ENCODE measurements at regions of chr15 and their contacts with region 1.

Region 1: DNA sequence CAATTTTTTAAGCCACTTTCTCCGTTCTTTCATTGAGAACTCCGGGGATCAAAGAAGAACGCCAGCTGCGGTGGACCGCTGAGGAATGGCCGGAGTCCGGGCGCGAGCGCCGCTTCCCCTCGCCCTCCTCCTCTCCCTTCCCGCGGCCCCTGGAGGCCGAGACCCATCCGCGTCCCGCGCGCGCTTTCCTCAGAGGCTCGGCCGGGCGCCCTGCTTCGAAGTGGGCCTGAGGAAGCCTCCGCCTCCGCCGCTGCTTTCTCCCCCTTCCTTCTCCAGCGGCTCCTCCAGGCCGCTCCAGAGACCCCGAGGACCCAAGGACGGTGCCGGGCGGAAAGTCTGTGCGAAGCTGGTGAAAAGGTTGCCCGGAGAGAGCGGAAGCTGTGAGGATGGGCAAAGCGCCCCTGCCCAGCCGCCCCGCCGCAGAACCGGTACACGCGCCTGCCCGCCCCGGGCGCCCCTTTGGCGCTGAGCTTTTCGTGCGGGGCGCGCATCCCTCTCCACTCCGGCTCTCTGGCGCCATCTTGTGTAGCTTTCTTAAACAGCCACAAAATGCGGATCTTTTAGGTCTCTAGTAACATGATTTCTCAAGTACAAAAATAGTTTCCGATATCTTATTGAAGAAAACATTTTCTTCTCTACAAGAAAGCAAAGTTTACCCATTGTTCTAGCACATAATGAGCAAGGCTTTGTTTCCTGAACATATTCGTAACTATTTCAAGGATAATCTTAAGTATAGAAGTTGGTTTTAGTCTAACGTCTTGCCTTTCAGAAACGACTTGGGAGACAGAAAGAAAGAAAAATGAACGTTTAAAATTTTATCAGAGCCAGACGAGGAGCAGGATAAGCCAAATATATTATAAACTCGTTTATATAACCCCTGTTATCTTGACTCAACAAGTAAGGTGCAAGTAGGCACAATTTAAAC is 59.2 kb upstream of the FAM174B start:
- DNase-seq: peak; percentile 88
- H3K4me3 ChIP-seq: peak overlapping the region; percentile 28 to 54 (median 52)
- H3K27ac ChIP-seq: peak overlapping the region; percentile 81 to 88 (median 84)
- H3K4me1 ChIP-seq: peaks cover 0 to 15% (median 4%) of the 10 kb centered on the region in 4 donors
- H3K27me3 ChIP-seq: no peaks in the 10 kb centered on the region
- CTCF ChIP-seq: peak; percentile 72 to 88 (median 78)
- EP300 ChIP-seq: no peak
- POLR2A ChIP-seq: peak; percentile 46 to 59

Region 2: GRCh38 chr15:91302588-91303439 is 1411.9 kb before region 1 on chr15:
- intact Hi-C with region 1: loop called (anchors 10 kb)
- DNase-seq: no peak
- H3K4me3 ChIP-seq: no peak overlapping the region
- H3K27ac ChIP-seq: no peak overlapping the region
- H3K4me1 ChIP-seq: peaks cover 0 to 8% (median 2%) of the 10 kb centered on the region in 4 donors
- H3K27me3 ChIP-seq: peaks cover 0 to 20% (median 13%) of the 10 kb centered on the region in 3 donors
- CTCF ChIP-seq: peak; percentile 39 to 67 (median 62)
- EP300 ChIP-seq: no peak
- POLR2A ChIP-seq: no peak

Region 3: DNA sequence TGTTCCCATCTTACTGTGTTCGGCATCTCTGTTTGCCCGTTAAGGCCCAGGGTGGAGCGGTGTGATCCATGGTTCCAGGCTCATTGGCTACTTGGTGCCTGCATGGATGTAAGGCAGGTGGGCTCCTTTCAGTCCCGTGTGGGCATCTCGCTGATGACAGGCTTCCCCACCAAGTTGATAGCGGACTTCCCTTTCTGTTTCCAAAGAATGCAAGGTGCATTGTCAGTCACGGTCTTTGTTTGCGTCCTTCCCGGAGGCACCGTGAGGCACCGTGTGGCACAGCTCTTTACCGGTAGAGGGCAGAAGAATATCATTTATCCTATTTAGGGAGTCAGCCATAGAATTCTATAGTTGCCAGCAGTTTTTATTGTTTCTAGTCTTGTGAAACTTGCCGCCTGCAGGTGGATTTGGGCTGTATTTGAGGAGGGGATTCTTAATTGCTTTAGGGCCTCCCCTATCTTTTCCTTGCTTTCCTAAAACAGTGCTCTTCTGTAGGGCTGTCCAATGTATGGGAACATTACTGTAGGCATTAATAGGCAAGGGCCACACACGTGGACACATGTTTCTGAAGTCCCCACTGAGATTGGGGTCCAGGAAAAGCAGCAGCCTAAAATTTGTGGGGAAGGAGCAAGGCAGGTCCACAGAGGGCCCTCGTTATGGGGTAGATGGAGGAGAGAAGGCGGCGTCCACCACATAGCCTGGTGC is 617.1 kb before region 1 on chr15:
- intact Hi-C with region 1: loop called (anchors 2 kb)
- DNase-seq: no peak
- H3K4me3 ChIP-seq: no peak overlapping the region
- H3K27ac ChIP-seq: no peak overlapping the region
- H3K4me1 ChIP-seq: peaks cover 0 to 5% (median 0%) of the 10 kb centered on the region in 4 donors
- H3K27me3 ChIP-seq: no peaks in the 10 kb centered on the region
- CTCF ChIP-seq: peak; percentile 25 to 73 (median 68)
- EP300 ChIP-seq: no peak
- POLR2A ChIP-seq: no peak

Region 4: DNA sequence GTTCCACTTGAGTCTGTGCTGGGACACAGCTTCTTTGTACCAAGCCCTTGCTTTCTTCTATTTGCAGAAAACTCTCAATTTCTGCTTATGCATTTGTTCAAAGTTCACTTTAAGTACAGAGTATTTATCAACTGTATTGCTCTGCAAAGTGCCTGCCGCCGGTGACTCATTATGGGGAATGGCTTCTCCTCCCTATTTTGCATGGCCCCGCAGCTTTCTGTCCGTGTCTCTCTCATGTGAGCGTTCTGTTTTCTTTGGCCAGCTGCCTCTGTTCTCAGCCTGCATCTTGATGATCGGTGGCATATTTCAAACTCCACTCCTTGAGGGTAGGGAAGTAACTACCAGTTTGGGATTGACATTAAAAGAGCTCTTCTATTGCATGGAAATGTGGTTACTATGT is 349.7 kb before region 1 on chr15:
- intact Hi-C with region 1: no loop called
- DNase-seq: no peak
- H3K4me3 ChIP-seq: no peak overlapping the region
- H3K27ac ChIP-seq: no peak overlapping the region
- H3K4me1 ChIP-seq: no peaks in the 10 kb centered on the region
- H3K27me3 ChIP-seq: no peaks in the 10 kb centered on the region
- CTCF ChIP-seq: no peak
- EP300 ChIP-seq: no peak
- POLR2A ChIP-seq: no peak

Region 5: GRCh38 chr15:92521624-92522008 is 193.1 kb before region 1 on chr15:
- intact Hi-C with region 1: loop called (anchors 1 kb)
- DNase-seq: peak; percentile 89
- H3K4me3 ChIP-seq: no peak overlapping the region
- H3K27ac ChIP-seq: peak overlapping the region in 2 of 4 donors; percentile 31 to 43
- H3K4me1 ChIP-seq: no peaks in the 10 kb centered on the region
- H3K27me3 ChIP-seq: no peaks in the 10 kb centered on the region
- CTCF ChIP-seq: peak; percentile 71 to 89 (median 85)
- EP300 ChIP-seq: no peak
- POLR2A ChIP-seq: no peak

Region 6: DNA sequence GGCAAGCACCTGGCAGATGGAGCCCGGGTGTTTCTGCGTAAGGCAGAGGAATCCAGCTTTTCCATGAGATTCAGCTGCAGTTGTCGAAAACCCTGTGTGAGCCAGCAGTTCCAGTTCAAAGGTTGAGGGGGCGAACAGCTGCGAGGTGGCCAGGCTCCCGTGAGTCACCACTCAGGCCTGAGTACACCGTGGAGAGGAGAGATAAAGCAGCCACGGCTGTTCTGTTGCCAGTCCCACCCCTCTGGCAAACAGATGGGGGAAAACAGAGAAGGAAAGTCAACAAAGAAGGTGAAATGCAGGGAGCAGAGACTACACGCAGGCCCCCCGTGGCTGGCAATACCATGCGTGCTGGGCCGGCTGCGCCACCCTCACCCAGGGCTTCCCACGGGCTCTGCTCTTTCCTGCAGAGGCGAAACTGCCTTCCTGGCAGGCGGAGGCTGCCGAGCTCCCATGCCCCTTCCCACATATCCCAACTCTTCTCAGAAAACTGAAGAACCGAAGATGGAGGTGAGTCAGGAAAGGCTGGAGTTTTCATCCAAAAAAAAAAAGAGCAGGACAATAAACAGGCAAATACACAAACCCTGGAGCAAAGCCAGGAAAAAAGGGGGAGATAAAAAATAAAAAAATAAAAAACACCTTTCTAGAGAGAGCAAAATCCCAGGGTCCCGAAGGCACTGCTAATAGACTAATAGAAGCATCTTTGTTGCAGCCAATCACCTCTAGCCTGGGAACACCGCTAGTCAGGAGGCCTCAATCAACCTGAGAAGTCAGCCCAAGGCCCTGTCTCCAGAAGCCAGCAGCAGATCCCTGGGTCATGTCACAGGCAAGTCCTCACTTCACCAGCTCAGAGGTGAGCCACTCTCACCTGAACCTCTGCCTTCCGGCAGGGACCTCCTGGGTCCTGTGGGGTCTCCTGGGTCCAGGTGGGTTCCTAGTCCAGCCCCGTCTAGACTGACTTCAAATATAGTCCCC is 96.9 kb before region 1 on chr15:
- intact Hi-C with region 1: loop called (anchors 5 kb)
- DNase-seq: peak; percentile 94
- H3K4me3 ChIP-seq: no peak overlapping the region
- H3K27ac ChIP-seq: peak overlapping the region; percentile 47 to 77 (median 70)
- H3K4me1 ChIP-seq: peaks cover 0 to 53% (median 41%) of the 10 kb centered on the region in 4 donors
- H3K27me3 ChIP-seq: no peaks in the 10 kb centered on the region
- CTCF ChIP-seq: no peak
- EP300 ChIP-seq: no peak
- POLR2A ChIP-seq: no peak

Region 7: GRCh38 chr15:92665100-92665555 is 49.6 kb before region 1 on chr15:
- intact Hi-C with region 1: loop called (anchors 10 kb)
- DNase-seq: peak; percentile 85
- H3K4me3 ChIP-seq: peak overlapping the region in 1 of 4 donors; percentile 18
- H3K27ac ChIP-seq: peak overlapping the region; percentile 62 to 76 (median 70)
- H3K4me1 ChIP-seq: peaks cover 0 to 41% (median 36%) of the 10 kb centered on the region in 4 donors
- H3K27me3 ChIP-seq: no peaks in the 10 kb centered on the region
- CTCF ChIP-seq: no peak
- EP300 ChIP-seq: peak; percentile 29 to 96 (median 71)
- POLR2A ChIP-seq: no peak

Region 8: DNA sequence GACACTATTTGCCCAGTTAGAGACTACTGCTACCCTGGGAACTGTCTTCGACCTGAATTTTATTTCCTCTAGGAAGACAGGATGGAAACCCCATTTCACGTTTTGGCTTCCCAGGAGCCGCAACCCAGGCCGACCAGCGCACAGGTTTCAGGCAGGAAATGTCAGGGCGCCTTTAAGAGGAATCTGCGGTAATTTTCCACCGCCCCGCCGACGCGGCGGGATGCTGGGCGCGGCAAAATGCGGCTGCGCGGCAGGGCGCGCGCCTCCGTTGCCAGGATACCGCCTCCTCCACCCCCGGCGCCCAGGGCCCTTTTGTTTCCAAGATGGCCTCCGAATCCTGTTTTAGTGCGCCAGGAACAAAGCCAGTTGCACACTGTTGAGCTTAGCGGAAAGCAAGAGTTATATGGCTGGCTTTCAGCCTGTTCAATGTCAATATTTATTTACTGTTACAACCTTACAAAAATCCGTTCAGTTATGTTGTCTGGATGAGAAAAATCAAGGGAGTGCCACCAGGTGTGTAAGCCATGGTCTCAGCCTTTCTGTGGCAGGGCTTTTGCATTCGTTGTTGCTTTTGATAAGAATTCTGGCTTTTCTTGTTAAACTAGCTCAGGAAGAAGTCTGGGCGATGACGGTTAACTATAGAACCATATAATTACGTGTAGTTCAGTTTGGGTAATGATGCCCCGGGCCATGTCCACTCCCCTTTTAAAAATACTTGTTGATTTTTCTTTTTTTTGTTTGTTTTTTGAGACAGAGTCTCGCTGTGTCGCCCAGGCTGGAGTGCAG is 105.7 kb after region 1 on chr15:
- intact Hi-C with region 1: no loop called
- DNase-seq: peak; percentile 95
- H3K4me3 ChIP-seq: peak overlapping the region; percentile 15 to 47 (median 38)
- H3K27ac ChIP-seq: peak overlapping the region; percentile 67 to 85 (median 82)
- H3K4me1 ChIP-seq: peaks cover 0 to 18% (median 17%) of the 10 kb centered on the region in 4 donors
- H3K27me3 ChIP-seq: no peaks in the 10 kb centered on the region
- CTCF ChIP-seq: no peak
- EP300 ChIP-seq: peak in 1 of 4 donors; percentile 77
- POLR2A ChIP-seq: peak; percentile 31 to 46

Region 9: GRCh38 chr15:92868992-92869988 is 154.6 kb after region 1 on chr15:
- intact Hi-C with region 1: no loop called
- DNase-seq: no peak
- H3K4me3 ChIP-seq: no peak overlapping the region
- H3K27ac ChIP-seq: peak overlapping the region; percentile 68 to 85 (median 78)
- H3K4me1 ChIP-seq: peaks cover 0 to 24% (median 16%) of the 10 kb centered on the region in 4 donors
- H3K27me3 ChIP-seq: no peaks in the 10 kb centered on the region
- CTCF ChIP-seq: no peak
- EP300 ChIP-seq: no peak
- POLR2A ChIP-seq: no peak

Region 10: DNA sequence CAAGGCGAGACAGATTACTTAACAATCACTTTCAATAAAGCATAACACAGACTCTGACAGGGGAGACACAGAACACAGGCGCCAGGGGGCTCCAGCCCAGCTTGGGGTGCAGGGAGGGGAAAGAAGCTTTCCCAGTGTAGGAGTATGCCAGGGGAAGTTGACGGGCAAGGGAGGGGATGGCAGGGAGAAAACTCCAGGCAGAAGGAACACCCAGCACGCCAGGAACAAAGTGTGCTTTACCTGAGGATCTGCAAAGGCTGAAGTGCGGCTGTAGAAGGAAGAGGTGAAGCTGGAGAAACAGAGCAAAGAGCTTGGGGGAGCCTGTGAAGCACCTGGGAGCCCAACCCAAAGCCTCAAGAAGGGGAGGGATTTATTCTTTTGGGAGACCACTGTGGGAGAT is 362.1 kb after region 1 on chr15:
- intact Hi-C with region 1: no loop called
- DNase-seq: no peak
- H3K4me3 ChIP-seq: no peak overlapping the region
- H3K27ac ChIP-seq: peak overlapping the region; percentile 60 to 96 (median 76)
- H3K4me1 ChIP-seq: peaks cover 0 to 85% (median 59%) of the 10 kb centered on the region in 4 donors
- H3K27me3 ChIP-seq: no peaks in the 10 kb centered on the region
- CTCF ChIP-seq: no peak
- EP300 ChIP-seq: peak in 3 of 4 donors; percentile 7 to 83 (median 9)
- POLR2A ChIP-seq: no peak

Measured in sigmoid colon (tissue), 7 donors.